ENCODE measurements at regions of chr2 and their contacts with region 1.

Region 1: DNA sequence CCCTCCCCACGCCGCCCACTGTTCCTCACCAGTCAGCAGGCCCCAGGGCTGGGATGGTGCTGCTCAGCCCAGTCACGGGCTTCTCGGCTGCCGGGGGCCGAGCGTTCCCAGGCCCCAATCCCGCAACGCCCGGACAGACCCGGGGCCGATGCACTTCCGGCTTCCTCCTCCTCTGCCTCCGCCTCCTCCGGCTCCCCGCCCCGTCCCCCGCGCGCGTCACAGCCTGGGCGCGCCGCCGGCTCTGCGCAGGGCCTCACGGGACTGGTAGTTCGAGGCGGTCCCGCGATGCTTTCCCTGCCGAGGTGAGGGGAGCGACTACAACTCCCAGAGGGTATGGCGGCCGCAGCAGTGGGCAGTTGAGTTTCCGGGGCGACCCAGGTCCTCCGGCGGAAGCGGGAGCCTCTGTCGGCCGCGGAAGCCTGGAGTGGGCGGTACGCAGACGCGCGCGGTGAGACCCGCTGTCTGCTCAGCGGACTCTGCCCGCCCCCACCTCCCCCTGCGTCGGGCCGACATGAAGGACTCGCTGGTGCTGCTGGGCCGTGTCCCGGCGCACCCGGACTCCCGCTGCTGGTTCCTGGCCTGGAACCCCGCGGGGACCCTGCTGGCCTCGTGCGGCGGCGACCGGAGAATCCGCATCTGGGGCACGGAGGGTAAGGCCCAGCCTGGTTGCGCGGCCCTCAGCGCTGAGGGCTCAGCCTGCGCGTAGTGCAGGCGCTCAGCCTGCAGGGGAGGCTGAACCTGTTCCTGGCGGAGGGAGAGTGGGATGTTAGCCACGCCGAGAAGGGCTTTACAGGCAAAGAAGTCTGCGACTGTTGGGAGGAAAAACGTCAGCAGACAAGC is at the starts of genes CIAO1 and TMEM127:
- DNase-seq: peak; percentile 90
- ATAC-seq: peak; percentile 94
- H3K4me3 ChIP-seq: peak within 1 kb of the TSS; percentile 98
- H3K27ac ChIP-seq: peak within 1 kb of the TSS; percentile 79
- H3K4me1 ChIP-seq: peaks cover 16% of the 10 kb centered on the region; the same call in 1 of the 2 replicates
- H3K27me3 ChIP-seq: no peaks in the 10 kb centered on the region
- CTCF ChIP-seq: peak; percentile 15 to 44 (median 40); a peak in 4 of 6 replicates
- EP300 ChIP-seq: peak; percentile 9 to 12; a peak in 1 of 4 replicates
- POLR2A ChIP-seq: peak; percentile 92
- RAD21 ChIP-seq: no peak
- polyA plus RNA-seq, gene CIAO1: 8.3 to 15.6 TPM
- polyA plus RNA-seq, gene TMEM127: 2.6 to 3.0 TPM

Region 2: DNA sequence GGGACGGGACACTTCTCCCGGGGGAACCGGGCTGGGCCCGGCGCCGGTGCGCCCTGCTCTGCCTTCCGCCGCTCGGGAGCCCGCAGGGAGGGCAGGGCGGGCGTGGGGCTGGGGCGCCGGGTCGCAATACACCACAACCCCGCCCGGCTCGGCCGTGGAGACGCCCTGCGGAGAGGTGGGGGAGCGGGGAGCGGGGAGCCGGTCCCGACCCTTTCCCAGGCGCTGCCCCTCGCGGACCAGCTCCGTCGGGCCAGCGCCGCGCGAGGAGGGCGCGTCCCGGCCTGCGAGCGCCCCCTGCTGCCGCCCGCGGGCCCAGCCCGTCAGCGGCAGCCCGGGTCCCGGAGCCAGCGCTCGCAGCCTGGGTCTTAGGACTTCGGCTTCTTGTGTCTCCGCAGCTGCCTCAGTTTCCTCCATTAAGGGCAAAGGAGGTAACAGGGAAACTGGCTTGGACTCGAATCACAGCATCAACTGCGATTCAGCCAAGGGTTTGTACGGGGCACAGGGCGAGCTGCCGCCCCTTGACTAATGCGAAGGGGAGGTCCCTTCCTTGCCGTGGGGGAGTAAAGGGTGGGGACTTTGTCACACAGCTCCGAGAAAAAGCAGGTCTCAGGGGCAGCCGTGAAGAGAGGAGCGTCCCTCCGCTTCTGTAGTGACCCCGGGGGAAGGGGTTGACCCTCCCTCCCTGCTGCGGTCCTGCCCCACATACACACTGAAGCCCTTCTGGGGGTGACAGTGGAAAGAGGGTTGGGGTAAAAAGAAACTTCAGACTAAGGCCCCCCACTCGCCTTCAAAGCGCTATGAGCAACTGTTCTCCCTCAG is 149.0 kb before region 1 on chr2:
- CTCF ChIA-PET with region 1: interaction called, 3 read pairs
- POLR2A ChIA-PET with region 1: no interaction called
- RAD21 ChIA-PET with region 1: no interaction called
- SMC1A ChIA-PET with region 1: no interaction called
- in situ Hi-C with region 1: no loop called
- intact Hi-C with region 1: loop called (anchors 5 kb)
- DNase-seq: no peak
- ATAC-seq: peak; percentile 91
- H3K4me3 ChIP-seq: peak overlapping the region; percentile 62
- H3K27ac ChIP-seq: no peak overlapping the region
- H3K4me1 ChIP-seq: peaks cover 10% of the 10 kb centered on the region
- H3K27me3 ChIP-seq: peaks cover 0 to 1% of the 10 kb centered on the region in 2 experiments; a peak in 2 of 4 replicates
- CTCF ChIP-seq: peak; percentile 60 to 88 (median 79); a peak in 5 of 6 replicates
- EP300 ChIP-seq: no peak
- POLR2A ChIP-seq: no peak
- RAD21 ChIP-seq: peak; percentile 76

Region 3: GRCh38 chr2:96233880-96234316 is 32.2 kb before region 1 on chr2:
- CTCF ChIA-PET with region 1: interaction called, 51 read pairs
- POLR2A ChIA-PET with region 1: interaction called, 11 read pairs
- RAD21 ChIA-PET with region 1: interaction called, 7 read pairs
- SMC1A ChIA-PET with region 1: interaction called, 48 read pairs
- in situ Hi-C with region 1: no loop called
- intact Hi-C with region 1: loop called (anchors 5 kb)
- DNase-seq: peak; percentile 68
- ATAC-seq: peak; percentile 99
- H3K4me3 ChIP-seq: no peak overlapping the region
- H3K27ac ChIP-seq: peak overlapping the region; percentile 50
- H3K4me1 ChIP-seq: peaks cover 21% of the 10 kb centered on the region
- H3K27me3 ChIP-seq: no peaks in the 10 kb centered on the region
- CTCF ChIP-seq: peak; percentile 44 to 51 (median 46); a peak in 5 of 6 replicates
- EP300 ChIP-seq: peak in 1 of 2 experiments; percentile 51; a peak in 1 of 4 replicates
- POLR2A ChIP-seq: no peak
- RAD21 ChIP-seq: peak; percentile 48

Region 4: GRCh38 chr2:96320728-96321622 is 54.9 kb after region 1 on chr2:
- CTCF ChIA-PET with region 1: interaction called, 3 read pairs
- POLR2A ChIA-PET with region 1: interaction called, 6 read pairs
- RAD21 ChIA-PET with region 1: no interaction called
- SMC1A ChIA-PET with region 1: interaction called, 3 read pairs
- in situ Hi-C with region 1: no loop called
- intact Hi-C with region 1: loop called (anchors 5 kb)
- DNase-seq: no peak
- ATAC-seq: peak; percentile 48
- H3K4me3 ChIP-seq: peak overlapping the region; percentile 90
- H3K27ac ChIP-seq: peak overlapping the region; percentile 88
- H3K4me1 ChIP-seq: peaks cover 30% of the 10 kb centered on the region
- H3K27me3 ChIP-seq: no peaks in the 10 kb centered on the region
- CTCF ChIP-seq: no peak
- EP300 ChIP-seq: no peak
- POLR2A ChIP-seq: no peak; the same call in 1 of the 2 replicates
- RAD21 ChIP-seq: no peak

Region 5: GRCh38 chr2:96715658-96716057 is 449.6 kb after region 1 on chr2:
- CTCF ChIA-PET with region 1: no interaction called
- POLR2A ChIA-PET with region 1: no interaction called
- RAD21 ChIA-PET with region 1: no interaction called
- SMC1A ChIA-PET with region 1: no interaction called
- in situ Hi-C with region 1: no loop called
- intact Hi-C with region 1: no loop called
- DNase-seq: no peak
- ATAC-seq: no peak
- H3K4me3 ChIP-seq: no peak overlapping the region
- H3K27ac ChIP-seq: no peak overlapping the region
- H3K4me1 ChIP-seq: no peaks in the 10 kb centered on the region
- H3K27me3 ChIP-seq: no peaks in the 10 kb centered on the region
- CTCF ChIP-seq: no peak
- EP300 ChIP-seq: no peak
- POLR2A ChIP-seq: no peak
- RAD21 ChIP-seq: no peak